Right cardiac atrium (tissue), 5 donors: ENCODE measurements at regions of chr12 and their contacts with region 1.

Region 1: GRCh38 chr12:52892172-52892852 is 12.6 kb downstream of the KRT8 start:
- DNase-seq: no peak
- ATAC-seq: no peak
- H3K4me3 ChIP-seq: no peak overlapping the region
- H3K27ac ChIP-seq: no peak overlapping the region
- H3K4me1 ChIP-seq: peaks cover 2% of the 10 kb centered on the region
- H3K27me3 ChIP-seq: no peaks in the 10 kb centered on the region

Region 2: GRCh38 chr12:52969828-52970569 is 77.7 kb after region 1 on chr12:
- intact Hi-C with region 1: loop called in 1 of 4 experiments (anchors 5 kb)
- DNase-seq: peak; percentile 48 to 67 (median 65)
- ATAC-seq: peak; percentile 33 to 65
- H3K4me3 ChIP-seq: no peak overlapping the region
- H3K27ac ChIP-seq: no peak overlapping the region
- H3K4me1 ChIP-seq: peaks cover 4% of the 10 kb centered on the region
- H3K27me3 ChIP-seq: no peaks in the 10 kb centered on the region

Region 3: DNA sequence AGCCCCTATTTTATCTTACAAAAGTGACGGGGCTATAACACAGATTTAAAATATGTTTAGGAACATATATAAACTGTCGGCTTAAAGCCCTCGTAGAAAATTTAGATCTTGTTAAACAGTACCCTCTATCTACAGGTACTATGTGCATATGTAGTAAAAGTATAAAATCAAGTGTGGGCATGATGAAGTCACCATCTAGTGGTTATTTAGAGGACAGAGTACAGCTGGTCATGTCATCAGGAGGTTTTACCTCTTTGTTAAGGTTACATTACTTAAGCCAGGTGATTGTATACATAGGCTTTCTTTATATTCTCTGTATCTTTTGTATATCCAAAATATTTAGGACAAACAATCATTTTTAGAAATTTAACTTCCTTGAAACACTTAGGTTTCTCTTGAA is 139.3 kb after region 1 on chr12:
- intact Hi-C with region 1: no loop called
- DNase-seq: no peak
- ATAC-seq: no peak
- H3K4me3 ChIP-seq: no peak overlapping the region
- H3K27ac ChIP-seq: no peak overlapping the region
- H3K4me1 ChIP-seq: no peaks in the 10 kb centered on the region
- H3K27me3 ChIP-seq: no peaks in the 10 kb centered on the region